ENCODE measurements at regions of chr5 and their contacts with region 1.

Region 1: GRCh38 chr5:170253844-170254455 is 21.2 kb downstream of the C5orf58 start:
- DNase-seq: peak; percentile 68
- H3K4me3 Mint-ChIP-seq: peak overlapping the region; percentile 13
- H3K27ac Mint-ChIP-seq: peak overlapping the region; percentile 66
- H3K4me1 Mint-ChIP-seq: peaks cover 62% of the 10 kb centered on the region
- H3K27me3 Mint-ChIP-seq: no peaks in the 10 kb centered on the region

Region 2: GRCh38 chr5:170235876-170236864 is 17.8 kb before region 1 on chr5:
- intact Hi-C with region 1: loop called (anchors 2 kb)
- DNase-seq: no peak
- H3K4me3 Mint-ChIP-seq: no peak overlapping the region
- H3K27ac Mint-ChIP-seq: no peak overlapping the region
- H3K4me1 Mint-ChIP-seq: peaks cover 10% of the 10 kb centered on the region
- H3K27me3 Mint-ChIP-seq: no peaks in the 10 kb centered on the region

Region 3: GRCh38 chr5:170287532-170287931 is 33.6 kb after region 1 on chr5:
- intact Hi-C with region 1: loop called (anchors 2 kb)
- DNase-seq: no peak
- H3K4me3 Mint-ChIP-seq: peak overlapping the region; percentile 43
- H3K27ac Mint-ChIP-seq: peak overlapping the region; percentile 91
- H3K4me1 Mint-ChIP-seq: peaks cover 100% of the 10 kb centered on the region
- H3K27me3 Mint-ChIP-seq: no peaks in the 10 kb centered on the region

Measured in activated T-helper 1 cell treated with anti-CD3 and anti-CD28 coated beads, Interleukin-12 subunit alpha, Interleukin-12 subunit beta, Interleukin-2, Interleukin-4 antibody, amounts not matched to agents 30 ng/mL and 10 ng/mL and 1 ng/mL, durations not matched to agents 14 hours and 24 hours and 36 hours (primary cell).